GM13977 (cell line): ENCODE measurements at regions of chr20 and their contacts with region 1.

Region 1: GRCh38 chr20:2972126-2972525 is 71.3 kb upstream of the GNRH2 start:
- DNase-seq: no peak
- CTCF ChIP-seq: no peak

Region 2: GRCh38 chr20:2051946-2052345 is 920.2 kb before region 1 on chr20:
- in situ Hi-C with region 1: no loop called
- DNase-seq: no peak
- CTCF ChIP-seq: no peak

Region 3: DNA sequence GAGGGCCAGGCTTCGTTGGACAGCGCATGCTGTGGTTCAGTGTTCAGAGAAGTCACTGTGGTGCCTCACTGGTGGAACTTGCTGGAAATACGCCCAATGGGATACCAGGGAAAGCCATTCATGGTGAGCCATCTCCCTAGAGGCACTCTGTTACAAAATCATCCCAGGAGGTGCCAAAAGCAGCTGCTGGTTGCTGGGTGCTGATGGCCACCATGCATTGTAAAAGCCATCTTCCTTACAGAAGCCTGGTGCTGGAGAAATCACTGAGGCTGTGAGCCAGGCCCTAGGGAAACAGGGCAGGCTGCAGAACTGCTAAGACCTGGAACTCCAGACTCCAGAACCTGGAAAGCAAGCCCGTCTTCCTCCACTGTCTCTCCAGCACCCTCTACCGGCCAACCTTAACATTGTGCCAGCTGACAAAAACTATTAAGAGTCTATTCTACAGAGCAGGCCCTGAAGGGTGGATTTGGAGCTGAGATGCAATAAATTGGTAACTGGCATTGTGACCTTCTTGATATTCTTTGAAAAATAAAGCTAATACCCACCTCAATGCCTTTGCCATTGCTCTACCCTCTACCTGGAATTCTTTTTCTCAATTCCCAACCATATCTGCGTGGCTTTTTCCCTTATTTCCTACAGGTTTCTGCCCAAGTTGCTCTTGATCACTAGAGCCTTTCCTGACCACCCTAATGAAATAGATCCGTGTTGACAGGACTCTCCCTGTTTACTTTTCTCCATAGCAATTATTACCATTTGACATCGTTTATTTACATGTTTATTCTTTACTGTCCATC is 520.0 kb before region 1 on chr20:
- in situ Hi-C with region 1: no loop called
- DNase-seq: peak; percentile 55
- CTCF ChIP-seq: peak; percentile 85

Region 4: DNA sequence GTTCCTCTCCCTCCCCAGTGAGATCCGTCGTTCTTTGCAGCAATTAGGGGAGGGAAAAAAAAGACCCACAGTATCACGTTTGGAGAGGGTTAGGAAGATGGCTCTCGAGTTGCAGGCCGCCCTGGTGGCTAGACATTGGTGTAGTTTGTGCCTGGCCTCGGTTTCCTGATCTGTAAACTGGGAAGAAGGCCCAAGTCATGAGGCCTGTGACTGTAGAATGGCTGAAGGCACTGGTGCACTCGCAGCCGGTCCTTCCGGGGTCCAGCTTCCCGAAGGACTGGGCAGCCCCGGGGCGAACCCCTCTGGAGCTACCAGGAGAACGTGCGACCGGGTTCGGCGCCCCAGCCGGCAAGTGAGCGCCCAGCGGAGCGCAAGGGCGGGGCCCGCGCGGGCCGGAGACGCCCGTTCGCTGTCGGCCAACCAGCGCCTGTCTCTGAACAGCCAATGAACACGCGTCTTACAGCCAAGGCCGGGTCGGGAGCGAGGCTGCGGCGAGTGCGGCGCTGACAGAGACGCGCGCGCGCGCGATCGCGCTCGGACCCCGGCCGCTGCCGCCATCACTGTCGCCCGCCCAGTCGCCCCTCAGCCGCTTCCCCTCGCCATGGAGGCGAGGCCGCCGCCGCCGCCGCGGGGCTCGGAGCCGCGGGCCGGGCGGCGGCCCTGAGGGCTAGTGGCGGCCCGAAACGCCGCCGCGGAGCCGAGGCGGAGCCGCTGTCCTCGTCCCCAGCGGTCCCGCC is 98.9 kb before region 1 on chr20 and contains the start of gene PTPRA:
- in situ Hi-C with region 1: loop called (anchors 10 kb)
- DNase-seq: peak; percentile 97
- CTCF ChIP-seq: no peak

Region 5: GRCh38 chr20:3270051-3270450 is 297.9 kb after region 1 on chr20:
- in situ Hi-C with region 1: no loop called
- DNase-seq: no peak
- CTCF ChIP-seq: no peak